ENCODE measurements at regions of chr5 and their contacts with region 1.

Region 1: DNA sequence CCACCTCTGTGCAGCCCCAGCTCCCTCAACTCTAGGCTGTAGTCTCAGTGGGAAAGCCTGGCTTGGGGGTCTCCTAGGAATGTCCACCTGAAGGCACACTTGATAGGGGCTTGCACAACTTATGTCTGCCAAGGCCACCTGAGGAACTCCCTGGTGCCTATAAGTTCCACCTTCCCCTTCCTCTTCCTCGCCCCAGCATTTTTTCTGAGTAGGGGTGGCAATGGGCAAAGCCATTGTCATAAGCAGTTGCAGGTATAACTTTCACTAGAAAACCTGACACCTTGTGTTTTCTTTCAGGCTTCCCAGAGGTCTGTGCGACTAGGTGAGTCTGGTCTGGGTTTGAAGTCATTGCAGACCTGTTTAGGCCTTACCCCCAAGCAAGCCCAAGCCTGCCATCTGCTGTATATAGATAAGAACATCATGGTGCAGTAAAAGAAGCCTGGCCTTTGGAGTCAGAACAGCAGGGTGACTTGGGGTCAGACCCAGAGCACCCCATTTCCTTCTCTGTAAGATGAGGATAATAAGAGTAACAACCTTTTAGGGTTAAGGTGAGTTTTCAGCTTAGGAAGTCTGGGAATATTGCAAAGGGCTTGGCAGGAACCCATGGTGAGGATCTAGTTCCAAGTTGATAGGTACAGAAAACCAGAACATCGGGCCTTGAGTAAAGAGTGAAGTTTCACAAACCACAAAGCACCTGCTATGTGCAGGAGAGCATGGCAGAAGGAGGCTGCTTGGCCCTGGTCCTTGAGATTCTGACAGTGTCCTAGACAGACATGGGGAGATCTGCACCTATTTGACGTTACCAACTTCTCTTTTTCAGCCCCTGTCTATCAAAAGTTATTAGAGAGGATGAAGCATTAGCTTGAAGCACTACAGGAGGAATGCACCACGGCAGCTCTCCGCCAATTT is 33.8 kb downstream of the TGFBI start:
- DNase-seq: peak; percentile 53
- H3K4me3 ChIP-seq: no peak overlapping the region
- H3K27ac ChIP-seq: no peak overlapping the region
- H3K4me1 ChIP-seq: peaks cover 15% of the 10 kb centered on the region
- H3K27me3 ChIP-seq: no peaks in the 10 kb centered on the region
- CTCF ChIP-seq: peak; percentile 55 to 70

Region 2: GRCh38 chr5:135551593-135552447 is 510.8 kb before region 1 on chr5:
- CTCF ChIA-PET with region 1: no interaction called
- dilution Hi-C with region 1: no loop called
- in situ Hi-C with region 1: no loop called
- intact Hi-C with region 1: loop called (anchors 5 kb)
- DNase-seq: peak; percentile 54
- H3K4me3 ChIP-seq: no peak overlapping the region
- H3K27ac ChIP-seq: no peak overlapping the region
- H3K4me1 ChIP-seq: no peaks in the 10 kb centered on the region
- H3K27me3 ChIP-seq: peaks cover 6% of the 10 kb centered on the region
- CTCF ChIP-seq: peak; percentile 82 to 86

Region 3: GRCh38 chr5:135944967-135945560 is 117.6 kb before region 1 on chr5:
- CTCF ChIA-PET with region 1: interaction called, 4 read pairs
- dilution Hi-C with region 1: no loop called
- in situ Hi-C with region 1: loop called in 1 of 2 experiments (anchors 5 kb)
- intact Hi-C with region 1: loop called (anchors 1 kb)
- DNase-seq: peak; percentile 63
- H3K4me3 ChIP-seq: no peak overlapping the region
- H3K27ac ChIP-seq: no peak overlapping the region
- H3K4me1 ChIP-seq: no peaks in the 10 kb centered on the region
- H3K27me3 ChIP-seq: no peaks in the 10 kb centered on the region
- CTCF ChIP-seq: peak; percentile 51 to 75

Region 4: GRCh38 chr5:136006761-136007251 is 55.8 kb before region 1 on chr5:
- CTCF ChIA-PET with region 1: no interaction called
- dilution Hi-C with region 1: no loop called
- in situ Hi-C with region 1: no loop called
- intact Hi-C with region 1: loop called (anchors 1 kb)
- DNase-seq: peak; percentile 96
- H3K4me3 ChIP-seq: no peak overlapping the region
- H3K27ac ChIP-seq: peak overlapping the region; percentile 82
- H3K4me1 ChIP-seq: peaks cover 50% of the 10 kb centered on the region
- H3K27me3 ChIP-seq: no peaks in the 10 kb centered on the region
- CTCF ChIP-seq: no peak

Region 5: DNA sequence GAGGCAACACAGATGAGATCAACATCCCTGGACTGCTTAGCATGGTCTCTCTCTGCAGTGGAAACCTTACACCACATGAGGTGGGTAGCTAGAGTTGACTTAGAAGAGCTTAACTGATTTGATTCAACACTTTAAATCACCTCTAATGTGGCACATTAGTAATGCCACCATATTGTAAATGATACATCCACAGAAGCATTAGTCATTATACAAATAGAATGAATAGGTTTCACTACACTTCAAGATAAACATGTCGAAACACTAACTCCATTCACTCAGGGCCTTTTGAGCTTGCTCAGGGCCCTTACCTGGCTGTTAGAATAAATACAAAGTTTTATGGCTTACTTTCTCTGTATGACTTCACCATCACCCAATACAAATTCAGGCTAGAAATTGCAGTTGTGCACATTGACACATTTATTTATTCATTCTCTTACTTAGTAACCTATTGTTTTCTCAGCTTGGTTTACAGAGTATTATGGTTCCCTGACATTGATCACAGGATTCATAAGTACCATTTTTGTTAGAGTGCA is 60.7 kb after region 1 on chr5:
- CTCF ChIA-PET with region 1: no interaction called
- dilution Hi-C with region 1: no loop called
- in situ Hi-C with region 1: no loop called
- intact Hi-C with region 1: no loop called
- DNase-seq: peak; percentile 97
- H3K4me3 ChIP-seq: no peak overlapping the region
- H3K27ac ChIP-seq: peak overlapping the region; percentile 83
- H3K4me1 ChIP-seq: peaks cover 15% of the 10 kb centered on the region
- H3K27me3 ChIP-seq: no peaks in the 10 kb centered on the region
- CTCF ChIP-seq: no peak

Region 6: GRCh38 chr5:136174021-136174659 is 111.5 kb after region 1 on chr5:
- CTCF ChIA-PET with region 1: no interaction called
- dilution Hi-C with region 1: no loop called
- in situ Hi-C with region 1: no loop called
- intact Hi-C with region 1: loop called (anchors 1 kb)
- DNase-seq: peak; percentile 50
- H3K4me3 ChIP-seq: no peak overlapping the region
- H3K27ac ChIP-seq: no peak overlapping the region
- H3K4me1 ChIP-seq: no peaks in the 10 kb centered on the region
- H3K27me3 ChIP-seq: no peaks in the 10 kb centered on the region
- CTCF ChIP-seq: peak; percentile 71 to 76

Region 7: GRCh38 chr5:136769900-136770684 is 707.5 kb after region 1 on chr5:
- CTCF ChIA-PET with region 1: no interaction called
- dilution Hi-C with region 1: no loop called
- in situ Hi-C with region 1: no loop called
- intact Hi-C with region 1: loop called (anchors 10 kb)
- DNase-seq: peak; percentile 45
- H3K4me3 ChIP-seq: no peak overlapping the region
- H3K27ac ChIP-seq: no peak overlapping the region
- H3K4me1 ChIP-seq: no peaks in the 10 kb centered on the region
- H3K27me3 ChIP-seq: peaks cover 2% of the 10 kb centered on the region
- CTCF ChIP-seq: peak; percentile 93 to 95

Measured in mammary epithelial cell (primary cell).